ENCODE measurements at regions of chr17 and their contacts with region 1.

Region 1: DNA sequence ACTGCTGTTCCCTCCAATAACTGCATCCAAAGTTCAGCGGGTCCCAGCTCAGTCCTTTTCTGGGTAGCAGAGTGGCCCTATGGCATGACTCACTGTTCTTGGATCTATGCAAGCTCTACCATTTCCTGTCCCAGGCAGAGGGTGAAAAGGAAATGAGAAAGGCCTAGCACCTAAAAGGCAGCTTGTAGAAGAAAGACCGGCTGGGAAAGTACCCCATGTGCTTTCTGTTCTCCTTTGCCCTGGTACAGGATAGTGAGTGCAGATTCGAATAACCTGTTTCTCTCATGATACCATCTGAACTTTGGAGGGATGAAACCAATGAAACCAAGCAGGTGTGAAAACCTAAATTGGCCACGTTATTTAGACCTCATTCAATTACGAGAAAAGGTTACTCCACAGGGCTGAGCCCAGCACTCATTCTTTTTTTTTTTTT is 12.7 kb upstream of the HASPIN start:
- DNase-seq: peak in 9 of 10 donors; percentile 66 to 86 (median 74)
- ATAC-seq: peak; percentile 99
- H3K4me3 Mint-ChIP-seq: peak overlapping the region in 9 of 10 donors; percentile 26 to 79 (median 63)
- H3K27ac Mint-ChIP-seq: peak overlapping the region in 9 of 10 donors; percentile 77 to 91 (median 88)
- H3K4me1 Mint-ChIP-seq: peaks cover 14 to 51% (median 37%) of the 10 kb centered on the region in 4 donors
- H3K27me3 Mint-ChIP-seq: no peaks in the 10 kb centered on the region

Region 2: GRCh38 chr17:3695723-3696411 is 15.1 kb before region 1 on chr17 and contains the start of gene P2RX5:
- POLR2A ChIA-PET with region 1: interaction called, 17 read pairs
- DNase-seq: peak in 9 of 10 donors; percentile 5 to 49 (median 31)
- ATAC-seq: peak; percentile 80 to 84
- H3K4me3 Mint-ChIP-seq: peak within 1 kb of the TSS; percentile 88 to 99 (median 92)
- H3K27ac Mint-ChIP-seq: peak within 1 kb of the TSS; percentile 63 to 97 (median 89)
- H3K4me1 Mint-ChIP-seq: peaks cover 8 to 51% (median 37%) of the 10 kb centered on the region in 4 donors
- H3K27me3 Mint-ChIP-seq: no peaks in the 10 kb centered on the region
- polyA plus RNA-seq, gene P2RX5: 15.6 to 23.6 (median 16.7) TPM

Region 3: DNA sequence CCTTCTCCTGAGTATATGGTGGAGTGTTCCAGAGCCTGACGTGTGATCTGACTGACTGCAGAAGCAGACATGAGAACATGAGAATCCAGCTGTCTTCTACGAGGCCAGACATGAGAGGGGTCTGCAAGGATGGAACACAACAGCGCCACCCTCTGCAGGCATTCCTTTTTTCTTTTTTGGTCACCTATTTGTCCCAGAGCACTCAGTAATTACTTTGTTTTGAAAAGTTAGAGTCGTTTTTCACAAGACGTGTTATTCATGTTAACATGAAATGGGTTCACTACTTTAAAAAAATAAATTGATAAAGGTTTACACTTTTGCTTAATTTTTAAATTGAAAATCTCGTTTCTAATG is 297.1 kb after region 1 on chr17:
- POLR2A ChIA-PET with region 1: no interaction called
- DNase-seq: no peak
- ATAC-seq: no peak
- H3K4me3 Mint-ChIP-seq: no peak overlapping the region
- H3K27ac Mint-ChIP-seq: no peak overlapping the region
- H3K4me1 Mint-ChIP-seq: peaks cover 6 to 12% (median 8%) of the 10 kb centered on the region in 4 donors
- H3K27me3 Mint-ChIP-seq: no peaks in the 10 kb centered on the region